CD8-positive, alpha-beta memory T cell (primary cell): ENCODE measurements at regions of chr11 and their contacts with region 1.

Region 1: GRCh38 chr11:78645226-78646202 is 70.8 kb upstream of the NARS2 start:
- DNase-seq: peak; percentile 6 to 57 (median 17)
- H3K4me3 ChIP-seq: no peak overlapping the region
- H3K4me3 Mint-ChIP-seq: peak overlapping the region in 4 of 7 donors; percentile 61 to 81 (median 70)
- H3K27ac ChIP-seq: no peak overlapping the region
- H3K27ac Mint-ChIP-seq: peak overlapping the region in 2 of 8 donors; percentile 35 to 64
- H3K4me1 ChIP-seq: peaks cover 4% of the 10 kb centered on the region
- H3K4me1 Mint-ChIP-seq: peaks cover 0 to 18% (median 10%) of the 10 kb centered on the region in 3 donors
- H3K27me3 ChIP-seq: no peaks in the 10 kb centered on the region
- H3K27me3 Mint-ChIP-seq: peaks cover 3 to 5% of the 10 kb centered on the region in 2 donors

Region 2: DNA sequence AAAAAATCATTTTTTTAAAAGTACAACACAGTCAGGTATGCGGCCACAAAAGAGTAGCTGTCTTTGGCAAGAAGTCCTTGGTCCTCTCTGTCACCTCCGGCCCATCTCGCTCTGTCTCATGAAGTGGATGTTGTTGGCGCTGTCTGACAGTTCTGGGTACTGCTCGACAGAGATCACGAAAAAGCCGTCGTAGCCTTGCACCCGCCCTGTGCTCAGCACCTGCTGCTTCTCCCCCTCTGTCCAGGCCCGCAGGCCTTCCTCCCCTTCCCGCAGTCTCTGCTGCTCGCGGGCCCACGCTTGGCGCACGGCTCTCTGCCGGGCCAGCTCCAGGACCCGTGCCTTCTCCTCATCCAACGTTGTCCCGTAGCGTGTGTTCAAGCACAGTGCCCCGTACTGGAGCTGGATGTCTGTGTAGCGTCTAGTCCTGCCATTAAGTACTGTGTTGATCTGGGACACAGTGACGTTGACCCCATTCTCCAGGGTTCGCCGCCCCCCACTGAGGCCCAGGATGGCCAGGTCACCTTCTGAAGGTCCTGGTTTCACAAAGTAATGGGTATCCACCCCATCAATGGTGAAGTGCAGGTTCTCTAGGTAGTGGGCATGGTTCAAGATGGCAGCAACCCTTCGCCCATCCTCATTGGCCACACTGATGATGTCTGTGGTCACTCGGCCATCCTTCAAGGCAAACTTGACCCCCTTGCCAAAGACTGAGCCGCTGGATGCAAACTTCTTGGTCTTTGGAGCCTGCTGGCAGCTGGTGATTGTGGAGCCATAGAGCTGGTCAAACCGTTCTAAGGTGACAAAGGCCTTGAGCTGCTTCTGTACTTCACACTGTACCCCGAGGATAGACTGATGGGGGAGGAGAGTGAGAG is 12.7 kb after region 1 on chr11:
- CTCF ChIA-PET with region 1: interaction called, 20 read pairs
- POLR2A ChIA-PET with region 1: no interaction called
- DNase-seq: no peak
- H3K4me3 ChIP-seq: no peak overlapping the region
- H3K4me3 Mint-ChIP-seq: no peak overlapping the region
- H3K27ac ChIP-seq: no peak overlapping the region
- H3K27ac Mint-ChIP-seq: no peak overlapping the region
- H3K4me1 ChIP-seq: no peaks in the 10 kb centered on the region
- H3K4me1 Mint-ChIP-seq: no peaks in the 10 kb centered on the region
- H3K27me3 ChIP-seq: no peaks in the 10 kb centered on the region
- H3K27me3 Mint-ChIP-seq: peaks cover 2 to 4% of the 10 kb centered on the region in 2 donors